Ascending aorta (tissue), 2 donors: ENCODE measurements at regions of chr4 and their contacts with region 1.

Region 1: GRCh38 chr4:121696581-121697461 is at the start of gene ANXA5:
- DNase-seq: peak; percentile 63 to 96
- H3K4me3 ChIP-seq: peak within 1 kb of the TSS; percentile 87 to 90
- H3K27ac ChIP-seq: peak within 1 kb of the TSS; percentile 98 to 100
- H3K4me1 ChIP-seq: peaks cover 0 to 20% of the 10 kb centered on the region in 2 donors
- H3K27me3 ChIP-seq: no peaks in the 10 kb centered on the region
- CTCF ChIP-seq: peak in 2 of 3 experiments; percentile 23 to 57
- total RNA-seq, gene ANXA5: 203 TPM

Region 2: GRCh38 chr4:121711263-121712000 is 14.6 kb after region 1 on chr4:
- intact Hi-C with region 1: loop called (anchors 1 kb)
- DNase-seq: peak; percentile 50 to 93
- H3K4me3 ChIP-seq: peak overlapping the region; percentile 27 to 51
- H3K27ac ChIP-seq: peak overlapping the region; percentile 61 to 77
- H3K4me1 ChIP-seq: no peaks in the 10 kb centered on the region
- H3K27me3 ChIP-seq: no peaks in the 10 kb centered on the region
- CTCF ChIP-seq: no peak

Region 3: DNA sequence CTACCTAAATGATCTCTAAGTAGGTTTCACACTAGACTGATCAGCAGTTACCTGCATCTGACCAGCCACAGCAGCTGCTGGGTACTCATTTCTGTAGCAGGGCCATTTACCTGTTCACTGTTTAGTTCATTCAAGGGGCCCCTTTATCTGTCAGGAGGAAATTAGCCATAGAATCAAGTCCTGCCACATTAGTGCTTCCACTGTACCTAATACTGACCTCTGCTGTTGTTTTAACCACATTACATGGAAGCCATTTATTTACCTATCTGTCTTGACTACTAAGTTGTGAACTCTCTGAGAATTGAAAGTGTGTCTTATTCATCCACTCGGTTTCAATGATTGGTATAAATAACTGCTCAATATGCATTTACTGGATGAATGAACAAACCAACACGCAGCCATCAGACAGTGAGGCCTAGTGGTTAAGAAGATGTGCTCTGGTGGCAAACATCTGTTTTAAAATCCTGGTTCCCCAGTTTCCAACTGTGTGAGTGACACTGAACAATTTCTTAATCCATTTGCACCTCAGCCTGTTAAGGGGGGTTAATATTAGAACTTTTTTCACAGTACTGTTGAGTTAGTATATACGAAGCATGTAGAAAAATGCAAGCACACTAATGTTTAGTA is 29.9 kb after region 1 on chr4:
- intact Hi-C with region 1: loop called (anchors 1 kb)
- DNase-seq: no peak
- H3K4me3 ChIP-seq: no peak overlapping the region
- H3K27ac ChIP-seq: no peak overlapping the region
- H3K4me1 ChIP-seq: no peaks in the 10 kb centered on the region
- H3K27me3 ChIP-seq: no peaks in the 10 kb centered on the region
- CTCF ChIP-seq: peak; percentile 55 to 67 (median 60)

Region 4: DNA sequence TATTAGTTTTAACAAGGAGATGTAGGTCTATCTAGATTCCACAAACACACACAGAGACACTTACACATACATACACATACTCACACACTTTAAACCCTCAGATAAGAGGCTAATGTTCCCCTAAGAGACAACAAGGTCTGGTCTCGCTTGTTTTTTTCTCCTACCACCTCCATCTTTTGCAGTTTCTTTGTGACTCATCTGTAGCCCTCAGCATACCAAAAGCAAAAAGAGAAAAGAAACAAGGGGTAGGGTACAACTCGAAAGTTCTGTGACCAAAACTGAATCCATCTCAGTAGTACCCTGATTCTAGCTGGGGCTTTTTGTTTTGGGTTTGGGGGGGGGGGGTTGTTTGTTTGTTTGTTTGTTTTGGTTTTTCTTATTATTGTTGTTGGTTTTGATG is 92.1 kb after region 1 on chr4:
- intact Hi-C with region 1: no loop called
- DNase-seq: no peak
- H3K4me3 ChIP-seq: no peak overlapping the region
- H3K27ac ChIP-seq: no peak overlapping the region
- H3K4me1 ChIP-seq: no peaks in the 10 kb centered on the region
- H3K27me3 ChIP-seq: no peaks in the 10 kb centered on the region
- CTCF ChIP-seq: no peak

Region 5: GRCh38 chr4:121869841-121870656 is 173.2 kb after region 1 on chr4 and contains the start of gene BBS7:
- intact Hi-C with region 1: loop called (anchors 2 kb)
- DNase-seq: peak; percentile 95 to 99
- H3K4me3 ChIP-seq: peak within 1 kb of the TSS; percentile 75 to 87
- H3K27ac ChIP-seq: peak within 1 kb of the TSS; percentile 91 to 93
- H3K4me1 ChIP-seq: peaks cover 0 to 2% of the 10 kb centered on the region in 2 donors
- H3K27me3 ChIP-seq: no peaks in the 10 kb centered on the region
- CTCF ChIP-seq: no peak
- total RNA-seq, gene BBS7: 5.6 TPM

Region 6: DNA sequence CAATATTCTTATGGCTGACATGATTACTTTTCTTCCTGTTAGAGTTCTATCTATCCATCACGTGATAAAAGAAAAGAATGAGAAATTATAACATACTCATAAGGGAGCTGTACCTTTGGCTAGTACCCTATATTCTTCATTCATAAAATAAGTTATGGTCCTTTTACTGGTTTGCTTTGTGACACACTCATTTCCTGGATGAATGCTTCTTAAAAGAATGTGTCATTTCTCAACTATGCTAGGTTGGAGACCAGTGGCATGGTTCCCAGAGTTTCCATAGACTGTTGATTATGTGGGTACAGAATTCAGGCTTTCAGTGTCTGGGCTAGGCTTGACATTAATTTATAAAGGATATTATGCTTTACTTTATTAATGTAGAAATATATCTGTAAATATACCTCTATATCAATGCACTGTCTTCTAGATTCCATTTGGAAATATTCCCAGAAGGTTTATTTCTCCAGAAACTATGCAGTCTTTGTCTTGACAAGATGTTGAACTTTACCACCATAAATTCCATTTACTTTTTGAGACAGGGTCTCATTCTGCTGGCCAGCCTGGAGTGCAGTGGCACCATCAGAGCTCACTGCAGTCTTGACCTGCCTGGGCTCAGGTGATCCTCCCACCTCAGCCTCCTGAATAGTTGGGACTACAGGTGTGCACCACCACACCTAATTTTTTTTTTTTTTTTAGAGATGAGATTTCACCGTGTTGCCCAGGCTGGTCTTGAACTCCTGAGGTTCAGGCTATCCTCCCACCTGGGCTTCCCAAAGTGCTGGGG is 1201.7 kb after region 1 on chr4:
- intact Hi-C with region 1: loop called (anchors 5 kb)
- DNase-seq: peak in 1 of 2 donors; percentile 85
- H3K4me3 ChIP-seq: no peak overlapping the region
- H3K27ac ChIP-seq: peak overlapping the region; percentile 60 to 78
- H3K4me1 ChIP-seq: peaks cover 0 to 46% of the 10 kb centered on the region in 2 donors
- H3K27me3 ChIP-seq: no peaks in the 10 kb centered on the region
- CTCF ChIP-seq: no peak